ENCODE measurements at regions of chr1 and their contacts with region 1.

Region 1: DNA sequence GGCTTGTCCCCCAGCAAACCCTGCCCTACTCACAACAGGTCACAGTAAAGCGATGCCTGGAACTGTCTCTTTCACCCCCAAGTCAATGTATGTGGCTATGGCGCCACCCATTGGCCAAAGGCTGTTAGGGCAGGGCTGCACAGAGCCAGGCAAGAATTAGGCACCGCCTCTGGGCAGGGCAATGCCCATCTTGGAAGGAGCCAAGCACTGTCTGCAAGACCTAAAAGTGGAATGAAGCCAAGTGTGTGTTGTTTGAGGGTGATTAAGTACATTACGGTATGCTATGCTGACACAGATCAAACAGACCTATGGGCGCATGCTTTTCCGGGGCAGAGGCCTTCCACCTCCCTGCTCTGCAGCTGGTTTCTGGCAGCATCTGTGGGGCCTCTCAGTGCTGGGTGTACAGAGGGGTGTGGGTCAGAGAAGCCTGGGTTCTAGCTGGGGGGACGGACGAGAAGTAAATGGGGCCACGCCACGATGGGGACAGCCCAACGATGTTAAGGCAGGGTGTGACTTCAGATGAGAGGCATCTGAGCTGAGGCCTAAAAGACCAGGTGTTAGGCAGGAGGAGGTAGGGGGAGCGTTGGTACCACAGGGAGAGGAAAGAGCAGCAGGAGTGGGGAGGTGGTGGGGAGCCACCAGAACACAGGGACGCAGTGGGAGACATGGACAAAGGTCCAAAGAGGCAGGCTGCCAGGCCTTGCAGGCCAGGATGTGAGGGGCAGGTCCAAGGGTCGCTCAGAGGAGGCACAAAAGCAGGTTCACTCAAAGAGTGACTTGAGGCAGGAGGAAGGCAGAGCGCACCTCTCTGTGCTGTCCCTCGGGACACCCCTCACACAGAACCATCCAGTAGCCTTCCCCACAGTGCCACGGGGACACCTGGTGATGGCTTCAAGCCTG is 49.8 kb downstream of the ACOT7 start:
- DNase-seq: peak in 13 of 14 experiments; percentile 26 to 72 (median 51)
- ATAC-seq: peak; percentile 54
- H3K4me3 ChIP-seq: no peak overlapping the region
- H3K4me3 Mint-ChIP-seq: no peak overlapping the region
- H3K27ac ChIP-seq: no peak overlapping the region
- H3K27ac Mint-ChIP-seq: no peak overlapping the region
- H3K4me1 ChIP-seq: peaks cover 12% of the 10 kb centered on the region
- H3K4me1 Mint-ChIP-seq: peaks cover 17% of the 10 kb centered on the region
- H3K27me3 ChIP-seq: no peaks in the 10 kb centered on the region
- H3K27me3 Mint-ChIP-seq: no peaks in the 10 kb centered on the region
- CTCF ChIP-seq: peak; percentile 33

Region 2: GRCh38 chr1:5830771-5831599 is 512.8 kb before region 1 on chr1:
- CTCF ChIA-PET with region 1: no interaction called
- POLR2A ChIA-PET with region 1: no interaction called
- intact Hi-C with region 1: no loop called
- DNase-seq: no peak
- ATAC-seq: no peak
- H3K4me3 ChIP-seq: no peak overlapping the region
- H3K4me3 Mint-ChIP-seq: no peak overlapping the region
- H3K27ac ChIP-seq: no peak overlapping the region
- H3K27ac Mint-ChIP-seq: no peak overlapping the region
- H3K4me1 ChIP-seq: no peaks in the 10 kb centered on the region
- H3K4me1 Mint-ChIP-seq: no peaks in the 10 kb centered on the region
- H3K27me3 ChIP-seq: peaks cover 0 to 3% of the 10 kb centered on the region in 2 experiments
- H3K27me3 Mint-ChIP-seq: peaks cover 15% of the 10 kb centered on the region
- CTCF ChIP-seq: no peak

Region 3: GRCh38 chr1:6359216-6360116 is 15.7 kb after region 1 on chr1:
- CTCF ChIA-PET with region 1: interaction called, 8 read pairs
- POLR2A ChIA-PET with region 1: interaction called, 30 read pairs
- intact Hi-C with region 1: loop called in 1 of 2 experiments (anchors 2 kb)
- DNase-seq: peak in 13 of 14 experiments; percentile 22 to 78 (median 46)
- ATAC-seq: peak; percentile 55
- H3K4me3 ChIP-seq: peak overlapping the region; percentile 27
- H3K4me3 Mint-ChIP-seq: peak overlapping the region; percentile 79
- H3K27ac ChIP-seq: peak overlapping the region; percentile 58 to 86
- H3K27ac Mint-ChIP-seq: peak overlapping the region; percentile 92
- H3K4me1 ChIP-seq: peaks cover 59% of the 10 kb centered on the region
- H3K4me1 Mint-ChIP-seq: peaks cover 65% of the 10 kb centered on the region
- H3K27me3 ChIP-seq: no peaks in the 10 kb centered on the region
- H3K27me3 Mint-ChIP-seq: no peaks in the 10 kb centered on the region
- CTCF ChIP-seq: no peak

Region 4: DNA sequence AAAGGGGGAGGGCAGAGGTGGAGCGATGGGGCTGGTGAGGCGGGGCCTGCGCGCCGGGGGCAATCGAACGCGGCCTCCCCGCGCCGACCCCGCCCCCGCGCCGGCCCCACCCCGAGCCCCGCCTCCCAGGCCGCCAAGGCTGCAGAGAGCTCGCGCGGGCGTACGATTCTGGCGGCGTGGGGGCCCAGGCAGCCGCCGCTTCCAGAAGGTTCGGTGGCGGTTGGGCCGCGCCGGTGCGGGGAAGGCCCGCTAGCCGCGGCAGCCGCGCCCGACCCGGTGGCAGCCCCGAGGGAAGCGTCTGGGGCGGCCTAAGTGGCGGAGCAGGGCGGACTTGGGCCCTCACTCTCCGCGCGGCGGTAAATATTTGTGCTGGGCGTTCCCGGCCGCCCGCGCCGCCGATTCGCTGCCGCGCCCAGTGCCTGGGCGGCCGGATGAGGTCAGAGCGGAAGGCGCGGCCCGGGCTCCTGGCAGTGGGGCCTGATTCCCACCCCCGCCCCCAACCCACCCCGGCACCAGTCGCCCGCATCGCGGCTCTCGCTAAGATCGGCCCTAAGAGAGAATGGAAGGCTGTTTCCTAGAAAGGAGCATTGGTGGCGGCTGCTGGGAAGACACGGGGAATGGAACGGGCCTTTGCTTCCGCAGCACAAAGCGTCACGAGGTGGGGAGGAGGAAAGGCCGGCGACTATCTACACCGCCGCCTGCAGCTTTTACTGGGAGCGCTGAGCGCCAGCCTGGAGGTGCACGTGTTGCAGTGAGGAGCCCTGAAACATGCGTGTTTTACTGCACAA is 49.8 kb after region 1 on chr1 and contains the start of gene ACOT7:
- CTCF ChIA-PET with region 1: interaction called, 4 read pairs
- POLR2A ChIA-PET with region 1: interaction called, 28 read pairs
- intact Hi-C with region 1: no loop called
- DNase-seq: peak; percentile 84 to 97 (median 90)
- ATAC-seq: peak; percentile 90
- H3K4me3 ChIP-seq: peak within 1 kb of the TSS; percentile 69
- H3K4me3 Mint-ChIP-seq: peak within 1 kb of the TSS; percentile 92
- H3K27ac ChIP-seq: peak within 1 kb of the TSS; percentile 69 to 81
- H3K27ac Mint-ChIP-seq: peak within 1 kb of the TSS; percentile 90
- H3K4me1 ChIP-seq: peaks cover 27% of the 10 kb centered on the region
- H3K4me1 Mint-ChIP-seq: peaks cover 31% of the 10 kb centered on the region
- H3K27me3 ChIP-seq: no peaks in the 10 kb centered on the region
- H3K27me3 Mint-ChIP-seq: no peaks in the 10 kb centered on the region
- CTCF ChIP-seq: no peak
- total RNA-seq, gene ACOT7: 5.3 to 5.4 TPM

Region 5: DNA sequence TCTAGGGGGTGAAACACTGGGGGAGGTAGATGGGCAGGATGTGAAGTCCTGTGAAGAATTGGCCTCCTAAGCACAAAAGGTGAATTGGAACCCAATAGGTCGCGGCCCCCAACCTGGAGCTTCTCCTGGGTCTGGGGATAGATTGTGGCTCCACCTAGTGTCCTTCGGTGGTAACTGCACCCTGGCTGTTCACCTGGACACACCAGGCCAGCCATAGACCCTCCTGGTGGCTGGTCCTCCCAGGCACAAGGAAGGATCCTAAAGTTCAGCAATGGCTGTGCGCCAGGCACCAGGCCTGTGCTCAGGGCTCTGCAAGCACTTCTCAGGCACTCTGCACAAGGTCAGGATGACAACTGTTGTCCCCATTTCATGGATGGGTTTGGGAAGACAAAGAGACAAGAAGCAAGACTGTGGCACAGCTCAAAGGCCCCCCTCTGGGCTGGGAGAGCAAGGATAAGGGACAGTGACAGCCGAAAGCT is 94.3 kb after region 1 on chr1:
- CTCF ChIA-PET with region 1: interaction called, 7 read pairs
- POLR2A ChIA-PET with region 1: interaction called, 5 read pairs
- intact Hi-C with region 1: loop called in 1 of 2 experiments (anchors 1 kb)
- DNase-seq: peak; percentile 56 to 85 (median 66)
- ATAC-seq: peak; percentile 65
- H3K4me3 ChIP-seq: no peak overlapping the region
- H3K4me3 Mint-ChIP-seq: peak overlapping the region; percentile 65
- H3K27ac ChIP-seq: no peak overlapping the region
- H3K27ac Mint-ChIP-seq: no peak overlapping the region
- H3K4me1 ChIP-seq: peaks cover 15% of the 10 kb centered on the region
- H3K4me1 Mint-ChIP-seq: peaks cover 9% of the 10 kb centered on the region
- H3K27me3 ChIP-seq: peaks cover 10 to 11% of the 10 kb centered on the region in 2 experiments
- H3K27me3 Mint-ChIP-seq: peaks cover 28% of the 10 kb centered on the region
- CTCF ChIP-seq: peak; percentile 97

Region 6: GRCh38 chr1:6613361-6614018 is 269.7 kb after region 1 on chr1 and contains the start of gene PHF13:
- CTCF ChIA-PET with region 1: no interaction called
- POLR2A ChIA-PET with region 1: no interaction called
- intact Hi-C with region 1: no loop called
- DNase-seq: peak; percentile 97 to 100 (median 99)
- ATAC-seq: peak; percentile 94
- H3K4me3 ChIP-seq: peak within 1 kb of the TSS; percentile 65
- H3K4me3 Mint-ChIP-seq: peak within 1 kb of the TSS; percentile 98
- H3K27ac ChIP-seq: peak within 1 kb of the TSS; percentile 32 to 50
- H3K27ac Mint-ChIP-seq: peak within 1 kb of the TSS; percentile 90
- H3K4me1 ChIP-seq: peaks cover 18% of the 10 kb centered on the region
- H3K4me1 Mint-ChIP-seq: peaks cover 26% of the 10 kb centered on the region
- H3K27me3 ChIP-seq: no peaks in the 10 kb centered on the region
- H3K27me3 Mint-ChIP-seq: no peaks in the 10 kb centered on the region
- CTCF ChIP-seq: no peak
- total RNA-seq, gene PHF13: 4.0 to 4.9 TPM

Measured in CD4-positive, alpha-beta T cell (primary cell).